CD4-positive, alpha-beta memory T cell (primary cell): ENCODE measurements at regions of chr2 and their contacts with region 1.

Region 1: GRCh38 chr2:7672027-7672684 is 754.9 kb downstream of the RNF144A start:
- DNase-seq: peak in 4 of 5 donors; percentile 37 to 43 (median 43)
- H3K4me3 ChIP-seq: no peak overlapping the region
- H3K4me3 Mint-ChIP-seq: peak overlapping the region; percentile 3 to 82 (median 68)
- H3K27ac ChIP-seq: no peak overlapping the region
- H3K27ac Mint-ChIP-seq: peak overlapping the region; percentile 75 to 93 (median 89)
- H3K4me1 ChIP-seq: peaks cover 19% of the 10 kb centered on the region
- H3K4me1 Mint-ChIP-seq: peaks cover 19 to 36% (median 25%) of the 10 kb centered on the region in 4 donors
- H3K27me3 ChIP-seq: no peaks in the 10 kb centered on the region
- H3K27me3 Mint-ChIP-seq: no peaks in the 10 kb centered on the region

Region 2: DNA sequence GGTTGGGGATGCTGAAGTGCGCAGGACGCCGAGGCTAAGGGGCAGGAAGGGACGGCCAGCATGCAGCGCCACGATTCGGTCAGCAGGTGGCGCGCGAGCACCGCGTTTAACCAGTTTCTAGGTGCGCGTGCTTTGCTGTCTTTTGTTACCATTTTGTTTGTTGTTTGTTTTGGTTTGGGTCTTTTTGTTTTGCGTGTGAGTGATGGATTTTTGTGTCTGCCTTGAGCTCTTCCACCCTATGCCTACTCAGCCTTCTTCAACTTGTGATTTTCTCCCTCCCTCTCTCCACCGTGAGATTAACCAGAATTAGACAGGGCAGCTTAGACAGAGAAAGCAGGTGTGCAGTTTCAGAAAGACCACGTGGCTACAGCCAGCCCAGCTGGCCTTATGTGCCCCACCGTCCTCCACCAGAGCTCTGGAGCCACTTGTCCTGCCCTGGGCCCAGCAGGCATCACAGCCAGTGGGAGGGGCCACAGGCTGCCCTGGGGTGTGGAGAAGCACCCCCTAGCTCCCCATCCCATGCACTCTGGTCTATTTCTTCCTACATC is 574.7 kb before region 1 on chr2:
- CTCF ChIA-PET with region 1: interaction called, 4 read pairs
- POLR2A ChIA-PET with region 1: no interaction called
- intact Hi-C with region 1: loop called (anchors 5 kb)
- DNase-seq: peak; percentile 65 to 72 (median 66)
- H3K4me3 ChIP-seq: peak overlapping the region in 1 of 2 donors; percentile 24
- H3K4me3 Mint-ChIP-seq: peak overlapping the region; percentile 69 to 87 (median 77)
- H3K27ac ChIP-seq: no peak overlapping the region
- H3K27ac Mint-ChIP-seq: peak overlapping the region in 5 of 7 donors; percentile 9 to 64 (median 26)
- H3K4me1 ChIP-seq: peaks cover 9% of the 10 kb centered on the region
- H3K4me1 Mint-ChIP-seq: peaks cover 3 to 9% (median 5%) of the 10 kb centered on the region in 4 donors
- H3K27me3 ChIP-seq: no peaks in the 10 kb centered on the region
- H3K27me3 Mint-ChIP-seq: peaks cover 0 to 1% of the 10 kb centered on the region in 2 donors

Region 3: GRCh38 chr2:7348761-7349160 is 323.4 kb before region 1 on chr2:
- CTCF ChIA-PET with region 1: no interaction called
- POLR2A ChIA-PET with region 1: no interaction called
- intact Hi-C with region 1: no loop called
- DNase-seq: no peak
- H3K4me3 ChIP-seq: no peak overlapping the region
- H3K4me3 Mint-ChIP-seq: no peak overlapping the region
- H3K27ac ChIP-seq: no peak overlapping the region
- H3K27ac Mint-ChIP-seq: no peak overlapping the region
- H3K4me1 ChIP-seq: no peaks in the 10 kb centered on the region
- H3K4me1 Mint-ChIP-seq: no peaks in the 10 kb centered on the region
- H3K27me3 ChIP-seq: no peaks in the 10 kb centered on the region
- H3K27me3 Mint-ChIP-seq: peaks cover 0 to 1% of the 10 kb centered on the region in 2 donors

Region 4: DNA sequence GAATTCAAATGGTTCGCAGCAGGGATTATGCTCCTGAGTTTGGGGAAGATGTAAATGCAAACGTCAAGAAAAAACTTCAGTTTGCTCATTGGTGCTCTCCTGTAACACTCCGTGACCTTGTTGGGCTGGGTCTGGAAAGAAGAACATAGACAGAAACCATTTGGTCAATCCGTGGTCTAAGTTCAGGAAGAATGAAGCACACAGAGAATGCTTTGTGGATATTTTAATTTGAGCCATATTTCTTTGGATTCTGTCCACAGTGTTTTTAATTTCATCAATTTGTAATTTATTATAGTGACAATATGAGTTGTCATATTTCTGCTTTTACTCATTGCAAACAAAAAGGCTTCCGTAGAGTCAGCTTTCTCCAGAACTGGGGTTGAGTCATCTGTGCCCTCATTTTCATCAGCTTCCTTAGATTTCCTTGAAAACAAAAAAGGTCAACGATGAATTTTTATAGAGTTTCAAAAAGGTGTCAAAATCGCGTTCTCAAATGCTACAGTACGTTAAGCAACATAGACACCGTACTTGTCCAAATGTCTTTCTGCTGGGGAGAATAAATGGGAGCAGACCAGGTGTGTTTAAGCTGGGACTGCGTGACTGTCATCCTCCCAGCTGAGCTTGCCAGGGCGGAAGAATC is 148.6 kb before region 1 on chr2:
- CTCF ChIA-PET with region 1: no interaction called
- POLR2A ChIA-PET with region 1: no interaction called
- intact Hi-C with region 1: no loop called
- DNase-seq: no peak
- H3K4me3 ChIP-seq: no peak overlapping the region
- H3K4me3 Mint-ChIP-seq: peak overlapping the region in 1 of 8 donors; percentile 14
- H3K27ac ChIP-seq: no peak overlapping the region
- H3K27ac Mint-ChIP-seq: no peak overlapping the region
- H3K4me1 ChIP-seq: no peaks in the 10 kb centered on the region
- H3K4me1 Mint-ChIP-seq: peaks cover 0 to 8% (median 3%) of the 10 kb centered on the region in 4 donors
- H3K27me3 ChIP-seq: no peaks in the 10 kb centered on the region
- H3K27me3 Mint-ChIP-seq: peaks cover 0 to 2% of the 10 kb centered on the region in 2 donors

Region 5: GRCh38 chr2:7567646-7568045 is 104.5 kb before region 1 on chr2:
- CTCF ChIA-PET with region 1: interaction called, 28 read pairs
- POLR2A ChIA-PET with region 1: interaction called, 4 read pairs
- intact Hi-C with region 1: loop called (anchors 1 kb)
- DNase-seq: peak in 4 of 5 donors; percentile 59 to 64 (median 60)
- H3K4me3 ChIP-seq: no peak overlapping the region
- H3K4me3 Mint-ChIP-seq: peak overlapping the region; percentile 3 to 78 (median 56)
- H3K27ac ChIP-seq: peak overlapping the region; percentile 16
- H3K27ac Mint-ChIP-seq: peak overlapping the region; percentile 48 to 93 (median 89)
- H3K4me1 ChIP-seq: peaks cover 40% of the 10 kb centered on the region
- H3K4me1 Mint-ChIP-seq: peaks cover 27 to 57% (median 46%) of the 10 kb centered on the region in 4 donors
- H3K27me3 ChIP-seq: no peaks in the 10 kb centered on the region
- H3K27me3 Mint-ChIP-seq: no peaks in the 10 kb centered on the region

Region 6: DNA sequence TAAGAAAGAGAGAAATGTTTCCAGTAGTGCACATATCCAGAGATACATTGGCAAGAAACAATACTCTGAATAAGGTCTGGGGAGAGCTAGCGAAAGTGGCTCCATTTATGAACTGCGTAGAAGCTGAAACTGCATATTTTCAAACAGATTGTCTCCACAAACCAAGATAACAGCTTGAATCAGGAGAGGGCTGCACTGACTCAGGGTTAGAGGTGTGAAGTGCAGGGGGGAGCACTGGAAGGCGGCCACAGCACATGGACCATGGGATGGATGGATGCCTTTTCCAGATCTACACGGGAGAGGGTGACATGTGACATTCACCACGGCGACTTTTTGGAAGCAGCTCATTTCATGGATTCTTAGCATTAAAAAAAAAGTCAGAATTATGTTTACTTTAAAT is 25.5 kb before region 1 on chr2:
- CTCF ChIA-PET with region 1: interaction called, 11 read pairs
- POLR2A ChIA-PET with region 1: no interaction called
- intact Hi-C with region 1: no loop called
- DNase-seq: no peak
- H3K4me3 ChIP-seq: no peak overlapping the region
- H3K4me3 Mint-ChIP-seq: no peak overlapping the region
- H3K27ac ChIP-seq: no peak overlapping the region
- H3K27ac Mint-ChIP-seq: peak overlapping the region in 1 of 7 donors; percentile 2
- H3K4me1 ChIP-seq: peaks cover 16% of the 10 kb centered on the region
- H3K4me1 Mint-ChIP-seq: peaks cover 21 to 27% (median 23%) of the 10 kb centered on the region in 4 donors
- H3K27me3 ChIP-seq: no peaks in the 10 kb centered on the region
- H3K27me3 Mint-ChIP-seq: peaks cover 0 to 1% of the 10 kb centered on the region in 2 donors

Region 7: DNA sequence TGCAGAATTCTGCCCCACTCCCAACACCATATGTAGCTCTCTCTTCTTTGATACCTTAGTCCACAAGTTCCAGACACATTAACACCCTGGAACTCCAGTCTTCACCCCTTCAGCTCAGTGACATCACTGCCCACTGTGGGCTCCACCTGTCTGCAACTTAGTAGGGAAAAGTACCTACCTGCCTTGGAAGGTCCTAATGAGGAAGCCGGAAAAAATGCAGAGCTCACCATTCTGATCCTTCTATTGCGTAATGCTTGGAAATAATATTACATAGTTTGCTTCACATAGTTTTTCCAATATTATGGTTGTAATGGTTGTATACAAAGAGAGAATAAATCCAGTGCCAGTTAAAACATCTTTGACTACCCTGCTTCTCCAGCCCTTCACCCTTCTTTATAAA is 16.5 kb before region 1 on chr2:
- CTCF ChIA-PET with region 1: interaction called, 10 read pairs
- POLR2A ChIA-PET with region 1: interaction called, 3 read pairs
- intact Hi-C with region 1: no loop called
- DNase-seq: no peak
- H3K4me3 ChIP-seq: no peak overlapping the region
- H3K4me3 Mint-ChIP-seq: no peak overlapping the region
- H3K27ac ChIP-seq: no peak overlapping the region
- H3K27ac Mint-ChIP-seq: peak overlapping the region in 1 of 7 donors; percentile 54
- H3K4me1 ChIP-seq: peaks cover 4% of the 10 kb centered on the region
- H3K4me1 Mint-ChIP-seq: peaks cover 12 to 39% (median 15%) of the 10 kb centered on the region in 4 donors
- H3K27me3 ChIP-seq: no peaks in the 10 kb centered on the region
- H3K27me3 Mint-ChIP-seq: no peaks in the 10 kb centered on the region